ENCODE measurements at regions of chr1 and their contacts with region 1.

Region 1: GRCh38 chr1:34529935-34530859 is 224.7 kb upstream of the GJB5 start:
- DNase-seq: peak; percentile 55
- CTCF ChIP-seq: no peak

Region 2: GRCh38 chr1:34520111-34520510 is 10.1 kb before region 1 on chr1:
- CTCF ChIA-PET with region 1: interaction called, 16 read pairs
- POLR2A ChIA-PET with region 1: no interaction called
- DNase-seq: no peak
- CTCF ChIP-seq: no peak